Posterior vena cava (tissue), 2 donors: ENCODE measurements at regions of chr17 and their contacts with region 1.

Region 1: GRCh38 chr17:55549140-55549539 is 37.9 kb upstream of the SMIM36 start:
- DNase-seq: no peak

Region 2: GRCh38 chr17:55536205-55536604 is 12.9 kb before region 1 on chr17:
- intact Hi-C with region 1: loop called in 1 of 2 experiments (anchors 1 kb)
- DNase-seq: no peak